Pancreas (tissue), 10 donors: ENCODE measurements at regions of chr19 and their contacts with region 1.

Region 1: GRCh38 chr19:56105090-56105701 is 15.9 kb downstream of the ZNF787 start:
- DNase-seq: peak; percentile 74 to 92 (median 80)
- ATAC-seq: peak; percentile 72 to 91 (median 88)
- H3K4me3 ChIP-seq: no peak overlapping the region
- H3K27ac ChIP-seq: peak overlapping the region; percentile 36 to 81 (median 70)
- H3K4me1 ChIP-seq: peaks cover 22 to 27% (median 23%) of the 10 kb centered on the region in 3 donors
- H3K27me3 ChIP-seq: no peaks in the 10 kb centered on the region
- CTCF ChIP-seq: peak; percentile 54 to 78 (median 73)

Region 2: GRCh38 chr19:56015756-56016155 is 89.4 kb before region 1 on chr19:
- intact Hi-C with region 1: no loop called
- DNase-seq: no peak
- ATAC-seq: no peak
- H3K4me3 ChIP-seq: no peak overlapping the region
- H3K27ac ChIP-seq: no peak overlapping the region
- H3K4me1 ChIP-seq: no peaks in the 10 kb centered on the region
- H3K27me3 ChIP-seq: no peaks in the 10 kb centered on the region
- CTCF ChIP-seq: no peak

Region 3: GRCh38 chr19:56080669-56081401 is 24.4 kb before region 1 on chr19:
- intact Hi-C with region 1: no loop called
- DNase-seq: peak; percentile 68 to 92 (median 82)
- ATAC-seq: peak; percentile 84 to 94 (median 86)
- H3K4me3 ChIP-seq: peak overlapping the region in 2 of 4 donors; percentile 38 to 44
- H3K27ac ChIP-seq: no peak overlapping the region
- H3K4me1 ChIP-seq: peaks cover 0 to 6% (median 0%) of the 10 kb centered on the region in 3 donors
- H3K27me3 ChIP-seq: no peaks in the 10 kb centered on the region
- CTCF ChIP-seq: peak; percentile 24 to 44 (median 31)

Region 4: DNA sequence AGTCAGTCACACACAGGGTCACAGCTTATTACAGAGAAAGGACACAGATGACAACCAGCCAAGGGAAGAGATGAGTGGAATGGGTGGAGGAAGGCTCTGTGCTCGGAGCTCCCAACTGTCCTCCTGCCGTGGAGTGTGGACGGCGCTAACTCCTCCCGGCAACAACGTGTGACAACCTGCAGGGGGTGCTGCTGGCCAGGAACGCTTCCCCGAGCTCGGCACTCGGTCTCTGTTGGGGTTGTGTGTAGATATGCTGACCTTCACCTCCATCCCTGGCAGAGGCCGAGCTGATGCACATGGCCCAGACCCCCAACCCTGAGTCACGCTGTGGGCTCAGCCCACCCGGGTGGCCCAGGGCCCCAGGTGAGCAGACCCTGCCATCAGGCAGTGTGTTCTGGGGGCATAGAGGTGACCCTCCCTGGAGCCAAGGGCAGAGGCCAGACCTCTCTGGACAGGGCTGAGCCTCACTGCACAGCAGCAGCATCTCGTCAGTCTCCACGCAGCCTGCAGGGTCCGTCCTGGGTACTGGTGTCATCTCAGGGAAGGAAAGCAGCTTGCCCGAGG is 50.0 kb after region 1 on chr19:
- intact Hi-C with region 1: loop called in 2 of 3 experiments (anchors 5 to 10 kb)
- DNase-seq: peak in 3 of 6 donors; percentile 51 to 76 (median 67)
- ATAC-seq: peak; percentile 55 to 66 (median 61)
- H3K4me3 ChIP-seq: no peak overlapping the region
- H3K27ac ChIP-seq: no peak overlapping the region
- H3K4me1 ChIP-seq: peaks cover 18 to 26% (median 18%) of the 10 kb centered on the region in 3 donors
- H3K27me3 ChIP-seq: no peaks in the 10 kb centered on the region
- CTCF ChIP-seq: peak in 2 of 4 donors; percentile 13 to 22